ENCODE measurements at regions of chr19 and their contacts with region 1.

Region 1: GRCh38 chr19:11293433-11294389 is 2.2 kb upstream of the TSPAN16 start:
- DNase-seq: peak; percentile 99
- ATAC-seq: peak; percentile 100
- H3K4me3 ChIP-seq: peak overlapping the region; percentile 53
- H3K27ac ChIP-seq: no peak overlapping the region
- H3K4me1 ChIP-seq: peaks cover 7% of the 10 kb centered on the region
- H3K27me3 ChIP-seq: no peaks in the 10 kb centered on the region
- CTCF ChIP-seq: peak; percentile 99

Region 2: GRCh38 chr19:11265513-11266236 is 28.0 kb before region 1 on chr19:
- CTCF ChIA-PET with region 1: interaction called, 16 read pairs
- POLR2A ChIA-PET with region 1: no interaction called
- intact Hi-C with region 1: no loop called
- DNase-seq: peak; percentile 98
- ATAC-seq: peak; percentile 95
- H3K4me3 ChIP-seq: peak overlapping the region; percentile 11; the same call in 1 of the 2 replicates
- H3K27ac ChIP-seq: peak overlapping the region; percentile 77
- H3K4me1 ChIP-seq: peaks cover 43% of the 10 kb centered on the region
- H3K27me3 ChIP-seq: no peaks in the 10 kb centered on the region
- CTCF ChIP-seq: no peak

Region 3: DNA sequence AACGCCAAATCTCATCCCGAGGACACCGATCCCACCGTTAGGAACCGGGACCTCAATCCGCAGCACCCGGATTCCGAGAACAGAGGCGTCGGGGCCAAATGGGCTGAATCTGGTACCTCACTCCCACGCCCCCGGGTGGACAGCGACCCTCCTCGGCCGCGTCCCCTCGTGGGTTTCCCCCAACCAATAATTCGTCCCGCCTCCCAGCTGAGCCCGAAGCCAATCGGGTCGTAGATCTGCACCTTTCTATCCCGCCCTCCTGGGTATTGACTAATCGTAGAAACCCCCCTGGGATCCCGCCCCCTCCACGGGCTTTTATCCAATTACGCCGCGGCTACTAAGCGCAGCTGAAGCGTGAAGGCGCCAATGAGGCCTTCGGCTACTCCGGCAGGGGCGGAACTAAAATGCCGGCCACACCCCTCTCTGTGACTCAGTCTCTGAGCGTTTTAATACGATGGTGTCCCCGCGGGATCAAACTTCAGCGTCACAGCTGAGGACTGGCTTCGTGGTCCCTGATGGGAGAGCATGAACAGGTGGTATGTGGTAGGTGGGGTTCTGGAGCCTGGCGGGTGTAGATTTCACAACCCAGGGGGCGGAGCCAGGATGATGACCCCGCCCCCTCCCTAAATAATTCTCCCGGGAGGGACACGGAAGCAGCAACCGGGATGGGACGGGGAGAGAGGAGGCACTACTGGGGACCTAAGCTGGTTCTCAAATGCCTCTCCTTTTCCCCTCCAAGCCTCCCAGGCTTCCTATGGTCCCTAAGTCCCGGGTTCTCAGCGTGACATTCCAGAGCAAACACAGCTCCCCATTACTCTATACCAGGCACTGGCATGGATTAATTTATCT is 52.6 kb after region 1 on chr19 and contains the starts of genes CCDC159 and TMEM205:
- CTCF ChIA-PET with region 1: interaction called, 9 read pairs
- POLR2A ChIA-PET with region 1: interaction called, 4 read pairs
- intact Hi-C with region 1: loop called (anchors 2 kb)
- DNase-seq: peak; percentile 100
- ATAC-seq: peak; percentile 82
- H3K4me3 ChIP-seq: peak within 1 kb of the TSS; percentile 80
- H3K27ac ChIP-seq: peak within 1 kb of the TSS; percentile 72
- H3K4me1 ChIP-seq: peaks cover 36% of the 10 kb centered on the region
- H3K27me3 ChIP-seq: no peaks in the 10 kb centered on the region
- CTCF ChIP-seq: 0 out of 2 replicates have a peak, but pooled peaks have one; percentile 24
- total RNA-seq, gene CCDC159: 10.3 and 14.5 TPM in 2 replicates
- total RNA-seq, gene TMEM205: 202 and 224 TPM in 2 replicates

Region 4: GRCh38 chr19:11380653-11381534 is 87.2 kb after region 1 on chr19:
- CTCF ChIA-PET with region 1: interaction called, 29 read pairs
- POLR2A ChIA-PET with region 1: no interaction called
- intact Hi-C with region 1: loop called (anchors 1 kb)
- DNase-seq: peak; percentile 99
- ATAC-seq: peak; percentile 68
- H3K4me3 ChIP-seq: peak overlapping the region; percentile 81
- H3K27ac ChIP-seq: peak overlapping the region; percentile 89
- H3K4me1 ChIP-seq: peaks cover 64% of the 10 kb centered on the region
- H3K27me3 ChIP-seq: no peaks in the 10 kb centered on the region
- CTCF ChIP-seq: peak; percentile 87

Region 5: GRCh38 chr19:11446652-11447301 is 153.1 kb after region 1 on chr19:
- CTCF ChIA-PET with region 1: no interaction called
- POLR2A ChIA-PET with region 1: interaction called, 11 read pairs
- intact Hi-C with region 1: no loop called
- DNase-seq: peak; percentile 57
- ATAC-seq: peak; percentile 80
- H3K4me3 ChIP-seq: no peak overlapping the region
- H3K27ac ChIP-seq: no peak overlapping the region
- H3K4me1 ChIP-seq: no peaks in the 10 kb centered on the region
- H3K27me3 ChIP-seq: no peaks in the 10 kb centered on the region
- CTCF ChIP-seq: peak; percentile 96

Region 6: DNA sequence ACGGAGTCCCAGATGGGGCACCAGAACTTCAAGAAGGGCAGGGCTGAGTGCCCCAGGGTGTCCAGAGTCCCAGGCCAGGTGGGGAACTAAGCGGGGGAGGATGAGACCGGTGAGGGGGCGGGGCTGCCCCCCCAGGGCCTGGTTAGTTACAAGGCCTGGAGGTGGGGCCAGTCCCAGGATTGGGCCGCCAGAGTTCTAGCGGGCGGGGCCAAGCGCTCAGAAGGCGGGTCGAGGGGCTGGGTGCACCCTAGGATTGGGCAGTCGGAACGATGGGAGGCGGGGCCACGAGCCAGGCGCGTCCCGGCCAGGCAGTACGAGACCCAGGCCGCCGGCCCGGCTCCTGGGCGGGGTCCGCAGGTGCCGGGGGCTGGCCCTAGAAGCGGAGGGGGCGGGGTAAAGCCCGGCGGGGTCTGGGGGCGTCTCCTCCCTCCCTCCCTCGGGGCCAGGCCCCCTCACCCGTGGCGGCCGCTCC is 211.4 kb after region 1 on chr19:
- CTCF ChIA-PET with region 1: interaction called, 12 read pairs
- POLR2A ChIA-PET with region 1: no interaction called
- intact Hi-C with region 1: no loop called
- DNase-seq: peak; percentile 99
- ATAC-seq: peak; percentile 96
- H3K4me3 ChIP-seq: peak overlapping the region; percentile 84
- H3K27ac ChIP-seq: peak overlapping the region; percentile 65
- H3K4me1 ChIP-seq: peaks cover 15% of the 10 kb centered on the region
- H3K27me3 ChIP-seq: no peaks in the 10 kb centered on the region
- CTCF ChIP-seq: no peak

Measured in PC-3 (cell line).